Left cardiac atrium (tissue), 4 donors: ENCODE measurements at regions of chr1 and their contacts with region 1.

Region 1: GRCh38 chr1:89085781-89086180 is 20.8 kb upstream of the GBP1 start:
- DNase-seq: no peak
- ATAC-seq: peak in 1 of 2 donors; percentile 46

Region 2: DNA sequence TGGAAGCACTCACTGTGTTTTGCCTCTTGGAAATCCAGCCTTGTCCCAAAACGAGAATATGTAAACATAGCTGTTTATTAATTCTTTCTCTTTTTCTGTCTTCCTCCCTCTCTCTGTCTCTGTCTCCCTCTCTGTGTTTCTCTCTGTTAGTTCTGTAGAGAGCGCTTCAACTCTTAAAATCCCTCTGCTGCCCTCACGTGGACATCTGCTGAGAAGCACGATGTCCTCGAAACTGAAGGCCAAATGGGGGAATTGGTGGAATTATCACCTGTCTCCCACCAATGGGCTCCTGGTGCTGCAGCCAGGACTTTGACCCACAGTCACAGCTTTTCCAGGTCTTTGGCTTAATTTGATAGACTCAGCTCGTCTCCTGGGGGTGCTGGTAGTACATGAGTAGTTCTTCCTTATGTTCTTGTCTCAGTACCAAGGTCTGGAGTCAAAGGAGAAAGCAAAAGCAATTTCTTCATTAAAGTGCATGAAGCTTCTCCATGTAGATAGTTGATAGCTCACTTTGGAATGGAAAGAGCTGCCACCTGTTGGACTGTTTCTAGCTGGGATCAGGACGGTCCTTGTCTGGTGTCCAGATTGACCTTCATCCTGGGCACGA is 272.6 kb after region 1 on chr1:
- intact Hi-C with region 1: loop called (anchors 10 kb)
- DNase-seq: peak; percentile 82
- ATAC-seq: peak; percentile 90 to 95

Region 3: GRCh38 chr1:89454845-89455521 is 369.2 kb after region 1 on chr1:
- intact Hi-C with region 1: loop called in 1 of 2 experiments (anchors 10 kb)
- DNase-seq: peak; percentile 29
- ATAC-seq: peak; percentile 41 to 51

Region 4: DNA sequence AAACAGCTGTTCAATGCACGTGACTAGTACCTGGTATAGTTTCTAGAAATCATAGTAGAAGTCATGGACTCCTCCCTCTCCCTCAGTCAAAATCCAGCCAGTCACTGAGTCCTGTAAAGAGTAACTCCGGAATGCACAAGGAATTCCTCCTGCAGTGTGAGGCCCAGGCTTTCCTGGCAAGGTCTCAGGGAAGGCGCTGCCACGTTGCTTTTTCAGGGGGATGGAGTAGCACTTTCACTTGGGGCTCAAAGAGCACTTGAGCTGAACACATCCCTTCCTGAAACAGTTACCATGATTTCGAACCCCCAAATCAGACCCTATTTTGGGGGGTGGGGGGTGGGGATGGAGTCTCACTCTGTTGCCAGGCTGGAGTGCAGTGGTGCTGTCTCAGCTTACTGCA is 708.6 kb after region 1 on chr1:
- intact Hi-C with region 1: no loop called
- DNase-seq: no peak
- ATAC-seq: no peak